PC-9 (cell line): ENCODE measurements at regions of chr2 and their contacts with region 1.

Region 1: DNA sequence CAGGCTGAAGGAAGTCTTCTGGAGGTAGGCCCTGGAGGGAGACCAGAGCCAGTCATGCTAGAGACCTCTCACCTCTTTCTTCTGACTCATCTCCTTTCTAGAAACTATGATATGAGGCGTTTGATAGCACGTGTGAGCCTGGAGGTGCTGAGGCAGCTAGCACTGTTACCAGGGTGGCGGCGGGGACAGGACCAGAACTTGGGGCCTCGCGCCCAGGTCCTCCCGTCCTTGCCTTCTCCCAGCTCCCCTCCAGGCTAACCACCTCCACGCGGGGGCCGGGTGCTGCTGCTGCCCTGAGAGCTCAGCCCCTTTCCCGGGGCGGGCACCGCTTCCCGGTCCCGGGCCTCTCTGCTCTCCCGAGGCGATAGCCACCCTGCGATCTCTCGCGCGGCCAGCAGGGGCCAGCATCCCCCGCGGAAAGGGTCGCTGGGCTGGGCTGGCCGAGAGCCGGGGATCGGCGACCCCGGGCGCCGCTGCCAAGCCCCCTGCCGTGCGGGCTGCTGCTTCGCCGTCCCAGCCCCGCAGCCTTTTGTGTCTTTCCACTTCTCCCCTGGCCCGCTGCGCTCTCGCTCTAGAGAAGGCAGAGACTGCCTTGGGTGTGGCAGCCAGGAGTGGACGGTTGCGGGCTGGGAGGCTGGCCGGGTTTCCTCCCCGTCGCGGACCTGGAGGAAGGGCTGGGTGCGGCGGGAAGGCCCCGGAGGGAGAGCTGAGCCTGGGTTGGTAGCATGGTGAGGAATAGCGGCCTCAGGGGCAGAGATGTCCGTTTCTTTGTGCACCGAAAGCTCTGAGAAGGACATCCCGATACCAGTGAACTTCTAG is 49.1 kb downstream of the TMEM17 start:
- DNase-seq: peak; percentile 85 to 88
- H3K4me3 ChIP-seq: peak overlapping the region; percentile 72
- H3K27ac ChIP-seq: peak overlapping the region; percentile 72
- H3K4me1 ChIP-seq: peaks cover 16% of the 10 kb centered on the region
- H3K27me3 ChIP-seq: no peaks in the 10 kb centered on the region
- CTCF ChIP-seq: peak; percentile 98

Region 2: GRCh38 chr2:62577994-62578781 is 121.3 kb after region 1 on chr2:
- CTCF ChIA-PET with region 1: interaction called, 5 read pairs
- POLR2A ChIA-PET with region 1: no interaction called
- intact Hi-C with region 1: loop called (anchors 1 kb)
- DNase-seq: peak; percentile 45 to 98
- H3K4me3 ChIP-seq: peak overlapping the region; percentile 24; the same call in 1 of the 2 replicates
- H3K27ac ChIP-seq: peak overlapping the region; percentile 99
- H3K4me1 ChIP-seq: peaks cover 41% of the 10 kb centered on the region
- H3K27me3 ChIP-seq: no peaks in the 10 kb centered on the region
- CTCF ChIP-seq: no peak

Region 3: GRCh38 chr2:62947403-62947802 is 490.5 kb after region 1 on chr2:
- CTCF ChIA-PET with region 1: no interaction called
- POLR2A ChIA-PET with region 1: no interaction called
- intact Hi-C with region 1: no loop called
- DNase-seq: peak in 1 of 2 experiments; percentile 49
- H3K4me3 ChIP-seq: no peak overlapping the region
- H3K27ac ChIP-seq: peak overlapping the region; percentile 1; the same call in 1 of the 2 replicates
- H3K4me1 ChIP-seq: peaks cover 17% of the 10 kb centered on the region
- H3K27me3 ChIP-seq: no peaks in the 10 kb centered on the region
- CTCF ChIP-seq: no peak